ENCODE measurements at regions of chr1 and their contacts with region 1.

Region 1: GRCh38 chr1:151459331-151460046 is at the start of gene POGZ:
- DNase-seq: peak; percentile 95 to 98
- H3K4me3 ChIP-seq: peak within 1 kb of the TSS; percentile 91 to 93
- H3K27ac ChIP-seq: peak within 1 kb of the TSS; percentile 97 to 99
- H3K4me1 ChIP-seq: peaks cover 0 to 36% (median 20%) of the 10 kb centered on the region in 4 donors
- H3K27me3 ChIP-seq: peaks cover 0 to 3% of the 10 kb centered on the region in 2 donors
- CTCF ChIP-seq: no peak

Region 2: GRCh38 chr1:151435160-151435559 is 24.3 kb before region 1 on chr1:
- intact Hi-C with region 1: no loop called
- DNase-seq: no peak
- H3K4me3 ChIP-seq: no peak overlapping the region
- H3K27ac ChIP-seq: no peak overlapping the region
- H3K4me1 ChIP-seq: peaks cover 0 to 68% (median 21%) of the 10 kb centered on the region in 4 donors
- H3K27me3 ChIP-seq: no peaks in the 10 kb centered on the region
- CTCF ChIP-seq: no peak

Region 3: DNA sequence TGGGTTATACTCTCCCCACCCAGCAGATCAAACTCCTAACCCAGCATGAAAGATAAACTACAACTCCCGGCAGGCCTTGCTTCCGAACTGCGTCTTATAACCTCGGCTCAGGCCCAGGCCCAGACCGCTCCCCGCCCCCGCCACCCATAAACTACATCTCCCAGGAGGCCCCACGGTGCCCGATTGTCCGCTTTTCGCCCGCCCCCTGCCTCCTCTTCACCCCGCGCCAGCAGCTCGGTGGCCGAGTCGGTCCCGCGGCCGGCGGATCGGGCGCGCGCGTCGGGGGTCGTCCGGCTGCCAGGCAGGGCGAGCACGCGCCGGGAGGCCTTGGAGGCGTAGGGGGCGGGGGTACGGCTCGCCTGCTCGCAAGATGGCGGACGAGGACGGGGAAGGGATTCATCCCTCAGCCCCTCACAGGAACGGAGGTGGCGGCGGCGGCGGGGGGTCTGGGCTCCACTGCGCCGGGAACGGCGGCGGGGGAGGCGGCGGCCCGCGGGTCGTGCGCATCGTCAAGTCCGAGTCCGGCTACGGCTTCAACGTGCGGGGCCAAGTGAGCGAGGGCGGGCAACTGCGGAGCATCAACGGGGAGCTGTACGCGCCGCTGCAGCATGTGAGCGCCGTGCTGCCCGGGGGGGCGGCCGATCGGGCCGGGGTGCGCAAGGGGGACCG is 152.5 kb after region 1 on chr1 and contains the start of gene SNX27:
- intact Hi-C with region 1: loop called (anchors 5 kb)
- DNase-seq: peak; percentile 95 to 96
- H3K4me3 ChIP-seq: peak within 1 kb of the TSS; percentile 99
- H3K27ac ChIP-seq: peak within 1 kb of the TSS; percentile 97 to 98
- H3K4me1 ChIP-seq: peaks cover 0 to 40% (median 7%) of the 10 kb centered on the region in 4 donors
- H3K27me3 ChIP-seq: peaks cover 0 to 4% of the 10 kb centered on the region in 2 donors
- CTCF ChIP-seq: no peak

Measured in tibial artery (tissue), 4 donors.